Calu3 (cell line): ENCODE measurements at regions of chr7 and their contacts with region 1.

Region 1: GRCh38 chr7:129376076-129376777 is 58.0 kb upstream of the STRIP2 start:
- DNase-seq: peak; percentile 77
- H3K4me3 Mint-ChIP-seq: no peak overlapping the region
- H3K27ac Mint-ChIP-seq: peak overlapping the region; percentile 44
- H3K4me1 Mint-ChIP-seq: peaks cover 31% of the 10 kb centered on the region
- H3K27me3 Mint-ChIP-seq: no peaks in the 10 kb centered on the region
- CTCF ChIP-seq: peak; percentile 50

Region 2: DNA sequence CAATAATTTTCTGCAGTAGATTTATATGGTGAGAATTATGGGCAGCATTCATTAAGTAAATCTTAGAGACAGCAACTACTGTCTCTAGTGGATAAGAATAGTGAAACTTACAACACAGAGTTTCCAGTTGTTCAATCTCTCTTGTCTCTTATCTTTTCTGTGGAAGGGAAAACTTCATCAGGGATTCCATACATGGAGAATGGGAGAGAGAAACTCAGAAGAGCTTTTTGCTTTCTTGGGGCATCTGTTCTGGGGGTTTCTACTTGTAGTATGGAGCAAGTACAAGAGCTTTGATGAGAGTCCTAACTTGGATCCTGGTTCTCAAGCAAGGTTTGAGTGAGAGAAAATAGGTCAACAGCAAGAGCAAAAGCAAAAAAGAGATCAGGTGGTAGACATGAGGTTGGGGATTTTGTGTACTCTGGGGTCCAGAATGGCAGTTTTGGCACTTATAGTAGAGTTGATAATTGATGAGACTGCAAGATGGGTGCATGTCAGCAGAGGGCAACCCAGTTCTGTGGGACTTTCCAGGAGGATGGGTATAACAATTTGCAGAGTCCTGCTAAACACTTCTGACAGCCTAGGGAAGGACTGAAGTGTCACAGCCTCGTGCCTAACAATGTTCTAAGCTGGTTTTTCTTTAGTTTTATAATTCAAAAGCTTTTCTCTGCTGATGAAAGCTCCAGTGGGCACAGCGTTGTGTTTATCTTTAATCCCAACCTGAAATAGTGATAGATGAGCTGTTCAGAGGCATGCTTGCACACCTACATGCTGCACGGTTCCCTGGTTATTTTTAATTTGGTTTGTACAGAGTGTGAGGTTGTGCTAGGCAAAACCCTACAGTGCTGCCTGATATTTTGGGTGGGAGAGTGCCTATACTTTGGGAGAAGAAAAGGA is 26.0 kb after region 1 on chr7:
- CTCF ChIA-PET with region 1: no interaction called
- intact Hi-C with region 1: no loop called
- DNase-seq: no peak
- H3K4me3 Mint-ChIP-seq: no peak overlapping the region
- H3K27ac Mint-ChIP-seq: no peak overlapping the region
- H3K4me1 Mint-ChIP-seq: no peaks in the 10 kb centered on the region
- H3K27me3 Mint-ChIP-seq: no peaks in the 10 kb centered on the region
- CTCF ChIP-seq: no peak

Region 3: DNA sequence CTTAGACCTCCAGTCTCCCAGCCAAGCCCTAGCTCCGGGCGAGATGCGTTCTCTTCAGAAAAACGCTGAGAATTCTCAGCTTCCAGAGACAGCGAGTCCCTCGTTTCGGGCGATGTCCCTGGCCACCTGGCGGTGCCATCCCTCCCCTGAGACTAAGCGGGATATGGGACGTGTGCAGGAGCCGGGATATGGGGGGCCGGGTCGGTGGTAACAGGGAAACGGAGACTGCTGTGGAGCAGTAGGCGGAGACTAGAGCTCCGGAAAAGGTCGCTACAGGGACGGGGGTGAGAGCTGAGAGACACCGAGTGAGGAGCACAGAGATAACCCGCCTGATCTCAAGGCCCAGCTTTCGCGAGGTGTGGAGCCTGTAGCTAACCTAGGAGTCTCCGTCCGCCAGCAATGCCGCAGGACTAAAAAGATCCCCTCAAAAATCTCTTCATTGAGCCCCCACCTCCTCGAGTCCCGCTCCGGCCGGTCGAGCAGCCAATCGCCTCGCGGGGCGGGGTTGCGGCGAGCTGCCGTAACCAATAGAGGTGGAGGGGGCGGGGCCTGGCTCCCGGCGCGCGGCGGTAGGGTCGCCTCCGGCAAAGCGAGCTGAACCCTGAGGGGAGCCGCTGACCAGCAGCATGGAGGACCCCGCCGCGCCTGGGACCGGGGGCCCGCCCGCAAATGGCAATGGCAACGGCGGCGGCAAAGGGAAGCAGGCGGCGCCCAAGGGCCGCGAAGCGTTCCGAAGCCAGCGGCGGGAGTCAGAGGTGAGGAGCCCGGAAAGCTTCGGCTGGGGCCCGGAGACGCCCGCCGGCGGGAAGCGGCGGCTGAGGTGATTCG is 57.8 kb after region 1 on chr7 and contains the start of gene STRIP2:
- CTCF ChIA-PET with region 1: interaction called, 12 read pairs
- intact Hi-C with region 1: no loop called
- DNase-seq: peak; percentile 94
- H3K4me3 Mint-ChIP-seq: peak within 1 kb of the TSS; percentile 94
- H3K27ac Mint-ChIP-seq: peak within 1 kb of the TSS; percentile 73
- H3K4me1 Mint-ChIP-seq: peaks cover 29% of the 10 kb centered on the region
- H3K27me3 Mint-ChIP-seq: peaks cover 15% of the 10 kb centered on the region
- CTCF ChIP-seq: no peak
- total RNA-seq, gene STRIP2: 10.1 and 13.2 TPM in 2 replicates